ENCODE measurements at regions of chr6 and their contacts with region 1.

Region 1: GRCh38 chr6:12605888-12606345 is 110.7 kb upstream of the PHACTR1 start:
- DNase-seq: peak; percentile 45
- ATAC-seq: peak; percentile 92
- H3K4me3 ChIP-seq: 0 out of 4 replicates have a peak overlapping the region, but pooled peaks of 1 of the 2 experiments have one; percentile 1
- H3K27ac ChIP-seq: peak overlapping the region; percentile 11; the same call in 1 of the 2 replicates
- H3K4me1 ChIP-seq: peaks cover 20% of the 10 kb centered on the region
- H3K27me3 ChIP-seq: no peaks in the 10 kb centered on the region
- CTCF ChIP-seq: peak; percentile 85

Region 2: DNA sequence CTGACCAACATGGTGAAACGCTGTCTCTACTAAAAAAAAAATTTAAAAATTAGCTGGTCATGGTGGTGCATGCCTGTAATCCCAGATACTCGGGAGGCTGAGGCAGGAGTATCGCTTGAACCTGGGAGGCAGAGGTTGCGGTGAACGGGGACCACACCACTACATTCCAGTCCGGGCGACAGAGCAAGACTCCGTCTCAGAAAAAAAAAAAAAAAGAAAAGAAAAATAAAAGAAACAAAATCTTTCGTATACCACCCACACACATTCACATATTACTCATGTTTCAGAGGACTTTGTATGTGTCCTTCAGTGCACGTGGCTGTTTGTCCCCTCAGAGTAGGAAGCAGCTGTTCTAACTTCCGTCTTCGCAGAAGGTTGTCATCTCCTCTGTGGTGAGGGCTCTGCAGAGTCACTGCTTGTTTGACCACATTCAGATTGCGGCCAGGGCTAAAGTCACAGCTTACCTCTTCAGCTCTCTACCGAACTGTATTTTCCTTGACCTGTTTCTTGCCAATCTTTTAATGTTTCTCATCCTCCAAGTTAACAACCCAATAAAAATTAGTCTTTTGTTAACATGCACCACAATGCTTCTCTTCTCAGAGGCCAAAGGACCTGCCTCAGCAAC is 630.5 kb before region 1 on chr6:
- CTCF ChIA-PET with region 1: no interaction called
- POLR2A ChIA-PET with region 1: no interaction called
- in situ Hi-C with region 1: no loop called
- intact Hi-C with region 1: no loop called
- DNase-seq: no peak
- ATAC-seq: no peak
- H3K4me3 ChIP-seq: no peak overlapping the region
- H3K27ac ChIP-seq: no peak overlapping the region
- H3K4me1 ChIP-seq: no peaks in the 10 kb centered on the region
- H3K27me3 ChIP-seq: no peaks in the 10 kb centered on the region
- CTCF ChIP-seq: no peak

Region 3: DNA sequence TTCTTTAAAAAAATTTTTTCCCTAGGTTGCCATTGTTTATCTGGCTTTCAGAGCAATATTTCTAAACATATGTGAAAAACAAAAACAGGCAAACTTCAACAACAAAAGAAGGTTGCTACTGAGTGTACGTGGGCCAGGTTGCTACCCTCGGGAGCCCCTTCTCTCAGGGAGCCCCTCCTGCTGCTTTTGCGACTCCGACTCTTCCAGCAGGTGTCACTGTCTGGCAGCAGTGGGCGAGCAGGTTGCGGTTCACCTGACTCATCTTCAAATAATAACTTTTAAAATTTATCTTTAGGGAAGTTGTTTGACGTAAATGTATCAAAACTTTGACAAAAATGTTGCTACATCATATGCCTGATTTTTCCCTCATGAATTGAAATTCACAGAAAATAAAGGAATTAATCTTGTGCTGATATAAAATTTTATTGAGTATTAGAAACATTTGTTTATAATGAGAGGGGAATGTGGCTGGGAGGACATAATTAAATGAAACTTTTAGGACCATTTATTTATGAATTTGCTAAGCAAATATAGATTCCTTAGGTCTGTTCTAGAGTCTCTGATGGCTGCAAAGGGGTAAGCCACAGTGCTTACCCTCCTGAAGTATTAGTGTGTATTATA is 455.0 kb before region 1 on chr6:
- CTCF ChIA-PET with region 1: no interaction called
- POLR2A ChIA-PET with region 1: no interaction called
- in situ Hi-C with region 1: no loop called
- intact Hi-C with region 1: loop called (anchors 5 kb)
- DNase-seq: no peak
- ATAC-seq: no peak
- H3K4me3 ChIP-seq: no peak overlapping the region
- H3K27ac ChIP-seq: no peak overlapping the region
- H3K4me1 ChIP-seq: peaks cover 24% of the 10 kb centered on the region
- H3K27me3 ChIP-seq: no peaks in the 10 kb centered on the region
- CTCF ChIP-seq: peak; percentile 85

Region 4: GRCh38 chr6:12289933-12290820 is 315.7 kb before region 1 on chr6 and contains the start of gene EDN1:
- CTCF ChIA-PET with region 1: interaction called, 13 read pairs
- POLR2A ChIA-PET with region 1: interaction called, 3 read pairs
- in situ Hi-C with region 1: no loop called
- intact Hi-C with region 1: loop called (anchors 1 kb)
- DNase-seq: peak; percentile 43
- ATAC-seq: peak; percentile 76
- H3K4me3 ChIP-seq: peak within 1 kb of the TSS; percentile 60 to 67
- H3K27ac ChIP-seq: peak within 1 kb of the TSS; percentile 93
- H3K4me1 ChIP-seq: peaks cover 61% of the 10 kb centered on the region
- H3K27me3 ChIP-seq: no peaks in the 10 kb centered on the region
- CTCF ChIP-seq: peak; percentile 22; the same call in 1 of the 2 replicates
- total RNA-seq, gene EDN1: 15.1 TPM

Region 5: GRCh38 chr6:12348530-12349511 is 257.1 kb before region 1 on chr6:
- CTCF ChIA-PET with region 1: interaction called, 5 read pairs
- POLR2A ChIA-PET with region 1: no interaction called
- in situ Hi-C with region 1: no loop called
- intact Hi-C with region 1: loop called (anchors 2 kb)
- DNase-seq: peak; percentile 84
- ATAC-seq: peak; percentile 97
- H3K4me3 ChIP-seq: peak overlapping the region in 1 of 2 experiments; percentile 7; a peak in 1 of 4 replicates
- H3K27ac ChIP-seq: peak overlapping the region; percentile 97
- H3K4me1 ChIP-seq: peaks cover 27% of the 10 kb centered on the region
- H3K27me3 ChIP-seq: no peaks in the 10 kb centered on the region
- CTCF ChIP-seq: no peak

Region 6: DNA sequence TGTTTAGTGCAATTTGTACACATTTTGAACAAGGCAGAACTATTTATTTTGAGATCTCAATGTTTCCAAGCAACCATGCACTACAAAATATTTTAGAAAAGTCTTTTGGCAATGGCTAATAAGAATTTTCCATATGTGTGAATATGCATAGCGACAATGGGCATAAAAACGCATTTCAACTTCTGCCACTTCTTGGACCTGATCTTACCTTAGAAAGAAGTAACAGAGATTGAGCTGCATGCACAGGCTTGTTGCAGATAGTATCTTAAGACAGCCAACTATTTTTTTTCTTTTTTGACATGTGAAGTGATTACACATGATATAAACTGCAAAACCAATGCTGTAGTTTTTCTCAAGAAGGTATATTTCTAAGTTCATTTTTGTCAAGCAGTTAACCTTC is 99.8 kb before region 1 on chr6:
- CTCF ChIA-PET with region 1: no interaction called
- POLR2A ChIA-PET with region 1: no interaction called
- in situ Hi-C with region 1: no loop called
- intact Hi-C with region 1: no loop called
- DNase-seq: no peak
- ATAC-seq: no peak
- H3K4me3 ChIP-seq: no peak overlapping the region
- H3K27ac ChIP-seq: no peak overlapping the region
- H3K4me1 ChIP-seq: no peaks in the 10 kb centered on the region
- H3K27me3 ChIP-seq: no peaks in the 10 kb centered on the region
- CTCF ChIP-seq: no peak